ENCODE measurements at regions of chr10 and their contacts with region 1.

Region 1: DNA sequence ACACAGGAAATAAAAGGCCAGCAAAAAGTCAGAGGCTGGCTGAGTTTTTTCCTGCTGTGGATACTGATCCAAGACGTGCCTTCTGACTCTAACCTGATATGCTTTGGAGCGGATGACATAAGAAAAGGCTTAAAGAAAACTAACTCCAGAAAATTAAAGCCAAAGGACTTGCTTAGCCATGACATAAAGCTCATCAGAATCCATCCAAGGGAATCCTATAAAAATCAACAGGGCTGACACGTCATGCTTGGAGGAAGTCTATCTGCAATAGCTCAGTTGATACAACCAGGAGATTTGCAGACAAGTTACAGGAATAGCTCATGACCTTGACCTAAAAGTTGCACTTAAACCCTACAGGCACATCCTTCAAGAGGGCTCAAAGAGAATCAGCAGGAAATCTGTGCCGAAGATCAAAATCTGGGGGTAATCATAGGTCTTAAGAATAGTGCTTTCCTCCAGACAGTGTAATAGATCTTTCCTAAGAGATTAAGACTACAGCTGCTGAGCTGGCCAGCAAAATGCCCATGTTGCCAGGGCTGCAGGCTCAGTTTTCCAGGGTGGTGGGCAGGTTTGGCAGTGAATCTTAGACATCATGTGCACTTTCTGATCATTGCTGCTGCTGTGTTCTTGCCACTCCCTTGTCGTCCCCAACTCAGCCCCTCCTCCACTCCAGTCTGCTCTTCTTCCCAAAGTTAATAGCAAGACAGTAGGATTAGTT is 111.5 kb upstream of the SVIL start:
- DNase-seq: no peak

Region 2: GRCh38 chr10:29784175-29784773 is 38.0 kb after region 1 on chr10:
- intact Hi-C with region 1: loop called in 1 of 2 experiments (anchors 5 kb)
- DNase-seq: peak; percentile 82

Region 3: DNA sequence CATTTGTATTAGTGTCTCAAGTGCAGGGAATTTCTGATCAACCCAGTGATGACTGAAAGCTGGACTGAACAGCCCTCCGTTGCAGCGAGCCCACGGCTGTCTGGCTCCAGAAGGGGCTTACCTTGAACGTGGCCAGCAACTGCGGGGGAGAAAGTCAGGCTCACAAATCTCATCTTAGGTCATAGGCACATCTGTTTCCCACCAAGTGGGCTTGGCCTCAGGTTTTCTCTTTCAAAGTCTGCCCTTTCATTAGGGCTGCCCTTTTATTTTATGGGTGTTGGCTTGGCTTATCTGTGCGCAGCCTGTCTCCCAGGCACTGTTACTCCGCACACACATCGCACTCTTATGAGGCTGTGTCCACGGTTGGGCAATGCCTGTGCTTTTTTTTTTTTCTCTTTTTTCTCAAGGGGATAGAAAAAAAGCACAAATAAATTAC is 135.1 kb after region 1 on chr10:
- intact Hi-C with region 1: no loop called
- DNase-seq: peak; percentile 83

Region 4: DNA sequence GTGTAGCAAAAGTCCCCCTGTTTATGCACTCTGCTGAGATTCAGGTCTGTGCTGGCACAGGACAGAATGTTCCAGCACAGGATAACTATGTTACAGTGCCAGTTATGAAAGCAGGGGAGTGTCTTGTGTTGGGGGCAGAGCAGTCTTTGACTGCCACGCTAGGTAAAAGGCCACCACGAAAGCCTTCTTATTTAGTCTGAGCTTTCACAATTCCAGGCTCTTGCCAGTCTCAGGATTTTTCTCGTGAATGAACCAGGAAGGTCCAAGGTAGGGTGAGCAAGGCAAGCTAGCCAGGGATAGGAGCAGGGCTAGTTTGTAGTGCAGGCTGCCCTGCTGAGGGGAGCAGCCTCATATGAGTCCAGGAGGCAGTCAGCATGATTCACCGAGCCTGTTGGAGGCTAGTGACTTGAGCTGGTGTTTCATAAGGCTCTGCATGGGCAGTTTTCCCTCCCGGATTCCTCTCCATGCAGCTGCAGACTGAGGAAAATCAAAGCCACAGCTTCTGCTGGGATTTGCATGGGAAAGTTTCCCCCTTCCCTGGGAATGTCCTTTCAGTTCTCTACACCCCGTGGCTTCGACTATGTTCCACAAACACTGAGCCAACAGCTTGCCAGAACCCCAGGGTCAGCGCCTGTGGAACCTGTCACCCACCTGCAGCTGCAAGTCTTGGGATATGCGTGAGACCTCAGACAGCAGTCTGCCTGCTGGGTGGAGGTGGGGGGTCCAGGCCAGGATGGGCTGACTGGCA is 200.9 kb after region 1 on chr10:
- intact Hi-C with region 1: no loop called
- DNase-seq: peak; percentile 84